MCF 10A (cell line): ENCODE measurements at regions of chr14 and their contacts with region 1.

Region 1: GRCh38 chr14:37150414-37150813 is 22.0 kb downstream of the SLC25A21 start:
- DNase-seq: peak; percentile 63
- H3K4me3 Mint-ChIP-seq: no peak overlapping the region
- H3K27ac Mint-ChIP-seq: peak overlapping the region; percentile 16
- H3K4me1 Mint-ChIP-seq: peaks cover 14% of the 10 kb centered on the region
- H3K27me3 Mint-ChIP-seq: no peaks in the 10 kb centered on the region
- CTCF ChIP-seq: peak; percentile 54

Region 2: DNA sequence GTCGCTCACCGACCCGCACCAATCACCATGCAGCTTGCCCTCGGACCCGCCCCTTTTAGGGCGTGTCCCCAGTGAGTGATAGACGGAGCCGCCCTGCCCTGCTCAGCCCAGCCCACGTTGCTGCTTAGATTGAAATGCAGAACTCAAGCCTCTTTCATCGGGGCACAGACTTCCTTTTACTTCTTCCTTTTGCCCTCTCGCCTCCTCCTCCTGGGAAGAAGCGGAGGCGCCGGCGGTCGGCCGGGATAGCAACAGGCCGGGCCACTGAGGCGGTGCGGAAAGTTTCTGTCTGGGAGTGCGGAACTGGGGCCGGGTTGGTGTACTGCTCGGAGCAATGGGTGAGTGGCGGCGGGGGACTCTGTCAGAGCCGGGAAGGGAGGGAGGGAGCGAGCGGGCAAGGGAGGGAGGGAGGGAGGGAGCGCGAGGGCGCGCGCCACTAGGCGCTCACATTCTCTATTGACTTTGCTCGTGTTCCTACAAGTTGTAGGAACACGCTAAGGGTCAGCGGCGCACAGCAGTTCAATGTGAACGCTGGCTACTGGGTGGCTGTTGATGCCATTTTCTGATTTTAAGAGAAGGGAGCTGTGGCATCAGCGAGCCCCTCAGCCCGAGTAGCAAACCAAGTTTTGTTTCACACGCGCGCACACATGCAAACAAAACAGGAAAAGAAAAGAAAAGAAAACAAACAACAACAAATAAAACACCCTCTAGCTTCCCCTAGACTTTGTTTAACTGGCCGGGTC is 488.5 kb before region 1 on chr14 and contains the start of gene PAX9:
- CTCF ChIA-PET with region 1: interaction called, 17 read pairs
- POLR2A ChIA-PET with region 1: no interaction called
- intact Hi-C with region 1: no loop called
- DNase-seq: peak; percentile 96
- H3K4me3 Mint-ChIP-seq: peak within 1 kb of the TSS; percentile 97
- H3K27ac Mint-ChIP-seq: peak within 1 kb of the TSS; percentile 92
- H3K4me1 Mint-ChIP-seq: peaks cover 27% of the 10 kb centered on the region
- H3K27me3 Mint-ChIP-seq: no peaks in the 10 kb centered on the region
- CTCF ChIP-seq: no peak
- total RNA-seq, gene PAX9: 5.5 and 7.3 TPM in 2 replicates

Region 3: GRCh38 chr14:36773136-36773540 is 377.3 kb before region 1 on chr14:
- CTCF ChIA-PET with region 1: interaction called, 9 read pairs
- POLR2A ChIA-PET with region 1: no interaction called
- intact Hi-C with region 1: loop called (anchors 2 kb)
- DNase-seq: peak; percentile 56
- H3K4me3 Mint-ChIP-seq: no peak overlapping the region
- H3K27ac Mint-ChIP-seq: no peak overlapping the region
- H3K4me1 Mint-ChIP-seq: peaks cover 5% of the 10 kb centered on the region
- H3K27me3 Mint-ChIP-seq: no peaks in the 10 kb centered on the region
- CTCF ChIP-seq: peak; percentile 34

Region 4: GRCh38 chr14:37133284-37133913 is 17.0 kb before region 1 on chr14:
- CTCF ChIA-PET with region 1: interaction called, 15 read pairs
- POLR2A ChIA-PET with region 1: interaction called, 3 read pairs
- intact Hi-C with region 1: no loop called
- DNase-seq: no peak
- H3K4me3 Mint-ChIP-seq: no peak overlapping the region
- H3K27ac Mint-ChIP-seq: no peak overlapping the region
- H3K4me1 Mint-ChIP-seq: no peaks in the 10 kb centered on the region
- H3K27me3 Mint-ChIP-seq: no peaks in the 10 kb centered on the region
- CTCF ChIP-seq: no peak